ENCODE measurements at regions of chr15 and their contacts with region 1.

Region 1: DNA sequence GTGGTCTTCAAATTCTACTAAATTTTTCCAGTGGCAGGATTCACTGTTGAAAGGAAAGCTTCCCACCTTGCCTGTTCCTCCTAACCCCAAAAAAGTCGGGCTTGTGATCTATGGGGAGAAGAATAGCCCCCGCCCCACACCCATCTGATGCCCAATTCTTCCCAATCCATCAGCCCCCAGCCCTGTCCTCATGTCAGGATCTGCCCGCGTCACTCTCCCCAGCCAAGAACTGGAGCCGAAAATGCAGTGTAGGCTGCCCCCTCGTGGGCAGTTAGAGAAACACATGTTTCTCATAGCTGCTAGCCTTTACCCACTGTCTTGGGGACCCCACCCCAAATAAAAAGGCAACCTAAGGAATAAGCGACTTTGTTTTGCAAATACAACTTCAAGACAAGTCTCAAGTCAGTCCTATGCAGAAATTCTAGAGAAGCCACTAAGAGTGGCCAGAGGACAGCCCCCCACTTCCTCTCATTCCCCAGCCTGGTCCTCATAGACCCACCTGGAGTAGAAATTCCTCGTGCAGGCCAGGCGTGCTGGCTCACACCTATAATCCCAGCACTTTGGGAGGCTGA is 13.0 kb upstream of the CSK start:
- DNase-seq: no peak
- H3K4me3 ChIP-seq: peak overlapping the region in 1 of 4 donors; percentile 5
- H3K27ac ChIP-seq: no peak overlapping the region
- H3K4me1 ChIP-seq: peaks cover 0 to 6% (median 3%) of the 10 kb centered on the region in 4 donors
- H3K27me3 ChIP-seq: peaks cover 0 to 16% (median 0%) of the 10 kb centered on the region in 3 donors
- CTCF ChIP-seq: peak; percentile 71 to 86 (median 86)
- EP300 ChIP-seq: no peak
- POLR2A ChIP-seq: no peak

Region 2: DNA sequence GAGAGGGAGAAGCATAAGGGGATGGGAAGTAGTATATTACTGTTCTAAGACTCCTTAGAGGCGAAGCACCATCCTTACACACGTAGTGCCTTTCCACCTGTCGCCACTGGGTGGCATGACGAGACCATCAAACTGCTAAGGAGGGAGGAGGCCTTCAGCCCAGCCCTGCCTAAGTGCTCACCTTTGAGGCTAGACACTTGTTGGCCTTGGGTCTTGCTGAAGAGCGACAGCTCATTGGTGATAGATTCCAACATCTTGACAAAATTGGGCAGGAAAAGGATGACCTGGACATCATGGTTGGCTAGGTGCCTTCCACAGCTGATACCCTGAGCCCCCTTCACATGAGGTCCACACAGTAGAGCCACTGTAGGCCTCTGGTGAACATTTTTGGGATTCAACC is 133.6 kb before region 1 on chr15:
- intact Hi-C with region 1: loop called (anchors 1 kb)
- DNase-seq: no peak
- H3K4me3 ChIP-seq: no peak overlapping the region
- H3K27ac ChIP-seq: no peak overlapping the region
- H3K4me1 ChIP-seq: no peaks in the 10 kb centered on the region
- H3K27me3 ChIP-seq: no peaks in the 10 kb centered on the region
- CTCF ChIP-seq: peak; percentile 72 to 88 (median 84)
- EP300 ChIP-seq: no peak
- POLR2A ChIP-seq: no peak

Region 3: DNA sequence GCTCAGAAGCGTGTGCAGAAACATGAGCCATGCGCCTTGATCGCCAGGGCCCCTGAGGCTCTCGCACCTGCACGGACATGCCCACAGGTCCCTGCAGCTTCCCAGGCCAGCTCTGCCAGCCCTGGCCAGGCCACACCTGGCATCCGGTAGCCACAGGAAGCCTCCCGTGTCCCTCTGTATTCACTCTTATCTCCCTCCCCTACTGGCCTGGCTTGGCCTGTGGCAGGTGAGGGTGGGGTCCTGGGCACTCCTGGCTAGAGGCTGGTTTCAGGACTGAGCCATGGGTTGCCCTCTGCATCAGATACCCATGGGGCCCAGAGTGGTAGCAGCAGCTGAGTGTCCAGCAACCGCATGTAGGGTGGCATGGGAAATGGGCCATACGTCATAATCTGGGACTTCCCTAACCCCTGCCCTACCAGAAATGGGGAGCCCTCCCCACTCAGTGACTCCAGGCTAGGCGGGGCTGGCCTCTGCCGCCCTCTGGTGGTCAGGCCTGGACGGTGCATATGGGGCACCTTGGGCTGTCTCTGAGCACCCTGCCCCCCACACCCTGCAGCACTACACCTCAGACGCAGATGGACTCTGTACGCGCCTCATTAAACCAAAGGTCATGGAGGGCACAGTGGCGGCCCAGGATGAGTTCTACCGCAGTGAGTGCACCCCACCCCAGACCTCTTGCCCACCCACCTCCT is 31.1 kb after region 1 on chr15:
- intact Hi-C with region 1: loop called (anchors 1 kb)
- DNase-seq: peak; percentile 80
- H3K4me3 ChIP-seq: no peak overlapping the region
- H3K27ac ChIP-seq: no peak overlapping the region
- H3K4me1 ChIP-seq: peaks cover 0 to 9% (median 5%) of the 10 kb centered on the region in 4 donors
- H3K27me3 ChIP-seq: no peaks in the 10 kb centered on the region
- CTCF ChIP-seq: peak; percentile 87 to 99 (median 93)
- EP300 ChIP-seq: no peak
- POLR2A ChIP-seq: no peak

Region 4: GRCh38 chr15:74812533-74812932 is 43.7 kb after region 1 on chr15 and contains the start of gene LMAN1L:
- intact Hi-C with region 1: no loop called
- DNase-seq: no peak
- H3K4me3 ChIP-seq: no peak within 1 kb of the TSS
- H3K27ac ChIP-seq: no peak within 1 kb of the TSS
- H3K4me1 ChIP-seq: peaks cover 0 to 25% (median 18%) of the 10 kb centered on the region in 4 donors
- H3K27me3 ChIP-seq: no peaks in the 10 kb centered on the region
- CTCF ChIP-seq: no peak
- EP300 ChIP-seq: no peak
- POLR2A ChIP-seq: no peak
- total RNA-seq, gene LMAN1L: 1.8 TPM in 1 of 4 donors, not detected in the others

Region 5: DNA sequence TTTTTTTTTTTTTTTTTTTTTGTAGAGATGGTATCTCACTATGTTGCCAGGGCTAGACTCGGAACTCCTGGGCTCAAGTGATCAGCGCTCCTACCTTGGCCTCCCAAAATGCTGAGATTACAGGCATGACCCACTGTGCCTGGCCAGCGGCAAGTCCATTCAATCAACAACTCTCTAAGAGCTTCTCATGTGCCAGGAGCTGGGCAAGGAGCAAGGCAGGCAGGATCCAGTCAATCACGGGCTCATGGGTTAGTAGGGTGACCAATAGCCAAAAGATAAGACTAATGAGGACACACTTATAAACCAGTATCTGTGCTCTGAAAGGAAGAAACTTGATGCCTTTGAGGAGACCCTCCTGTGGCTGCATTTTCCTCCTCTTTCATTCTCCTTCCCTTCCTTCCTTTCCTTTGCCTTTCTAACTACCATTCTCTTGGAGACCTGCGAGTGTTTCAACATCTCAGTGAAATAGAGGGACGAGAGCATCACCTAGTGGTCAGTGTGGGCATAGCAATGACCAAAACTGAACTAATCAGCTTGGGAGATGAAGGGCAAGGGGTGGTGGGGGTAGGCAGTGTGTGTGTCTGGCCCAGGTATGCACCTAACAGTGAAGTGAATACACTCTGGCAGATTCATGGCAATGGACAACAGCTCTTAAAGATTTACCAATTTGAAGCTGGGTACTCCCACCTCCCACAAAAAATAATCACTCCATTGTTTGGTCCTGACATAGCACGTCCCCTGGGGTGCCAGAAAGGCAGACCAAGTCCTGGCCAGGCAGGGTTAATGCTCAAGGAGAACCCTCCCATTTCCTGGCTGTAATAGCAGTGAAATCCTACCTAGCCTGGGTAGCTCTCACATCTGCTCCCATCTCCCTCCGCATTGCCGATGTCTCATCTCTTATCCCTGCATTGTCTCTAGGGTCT is 181.5 kb after region 1 on chr15:
- intact Hi-C with region 1: loop called (anchors 1 kb)
- DNase-seq: peak; percentile 85
- H3K4me3 ChIP-seq: no peak overlapping the region
- H3K27ac ChIP-seq: no peak overlapping the region
- H3K4me1 ChIP-seq: peaks cover 0 to 11% (median 3%) of the 10 kb centered on the region in 4 donors
- H3K27me3 ChIP-seq: peaks cover 0 to 23% (median 0%) of the 10 kb centered on the region in 3 donors
- CTCF ChIP-seq: peak; percentile 99 to 100 (median 99)
- EP300 ChIP-seq: no peak
- POLR2A ChIP-seq: no peak